HEK293 (cell line): ENCODE measurements at regions of chr6 and their contacts with region 1.

Region 1: GRCh38 chr6:35318196-35319171 is 20.9 kb downstream of the DEF6 start:
- H3K4me3 ChIP-seq: peak overlapping the region; percentile 63
- H3K27ac ChIP-seq: peak overlapping the region; percentile 2; the same call in 1 of the 2 replicates
- H3K4me1 ChIP-seq: no peaks in the 10 kb centered on the region
- CTCF ChIP-seq: peak; percentile 86

Region 2: GRCh38 chr6:35259194-35259947 is 59.1 kb before region 1 on chr6 and contains the start of gene ZNF76:
- CTCF ChIA-PET with region 1: no interaction called
- POLR2A ChIA-PET with region 1: interaction called, 24 read pairs
- H3K4me3 ChIP-seq: peak within 1 kb of the TSS; percentile 76
- H3K27ac ChIP-seq: peak within 1 kb of the TSS; percentile 85
- H3K4me1 ChIP-seq: peaks cover 3% of the 10 kb centered on the region; the same call in 1 of the 2 replicates
- CTCF ChIP-seq: no peak

Region 3: GRCh38 chr6:35297601-35298481 is 20.6 kb before region 1 on chr6 and contains the start of gene DEF6:
- CTCF ChIA-PET with region 1: interaction called, 12 read pairs
- POLR2A ChIA-PET with region 1: interaction called, 18 read pairs
- H3K4me3 ChIP-seq: no peak within 1 kb of the TSS
- H3K27ac ChIP-seq: no peak within 1 kb of the TSS
- H3K4me1 ChIP-seq: no peaks in the 10 kb centered on the region
- CTCF ChIP-seq: 0 out of 2 replicates have a peak, but pooled peaks have one; percentile 45

Region 4: DNA sequence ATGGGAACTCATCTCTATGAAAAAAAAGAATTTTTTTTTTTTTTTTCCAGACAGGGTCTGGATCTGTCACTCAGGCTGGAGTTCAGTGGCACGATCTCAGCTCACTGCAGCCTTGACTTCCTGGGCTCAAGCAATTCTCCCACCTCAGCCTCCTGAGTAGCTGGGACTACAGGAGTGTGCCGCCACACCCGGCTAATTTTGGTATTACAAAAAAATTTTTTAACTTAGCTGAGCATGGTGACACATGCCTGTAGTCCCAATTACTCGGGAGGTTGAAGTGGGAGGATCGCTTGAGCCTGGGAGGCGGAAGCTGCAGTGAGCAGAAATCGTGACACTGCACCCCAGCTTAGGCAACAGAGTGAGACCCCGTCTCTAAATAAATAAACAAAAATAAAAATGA is 13.4 kb before region 1 on chr6:
- CTCF ChIA-PET with region 1: interaction called, 6 read pairs
- POLR2A ChIA-PET with region 1: interaction called, 18 read pairs
- H3K4me3 ChIP-seq: no peak overlapping the region
- H3K27ac ChIP-seq: no peak overlapping the region
- H3K4me1 ChIP-seq: no peaks in the 10 kb centered on the region
- CTCF ChIP-seq: 0 out of 2 replicates have a peak, but pooled peaks have one; percentile 19

Region 5: DNA sequence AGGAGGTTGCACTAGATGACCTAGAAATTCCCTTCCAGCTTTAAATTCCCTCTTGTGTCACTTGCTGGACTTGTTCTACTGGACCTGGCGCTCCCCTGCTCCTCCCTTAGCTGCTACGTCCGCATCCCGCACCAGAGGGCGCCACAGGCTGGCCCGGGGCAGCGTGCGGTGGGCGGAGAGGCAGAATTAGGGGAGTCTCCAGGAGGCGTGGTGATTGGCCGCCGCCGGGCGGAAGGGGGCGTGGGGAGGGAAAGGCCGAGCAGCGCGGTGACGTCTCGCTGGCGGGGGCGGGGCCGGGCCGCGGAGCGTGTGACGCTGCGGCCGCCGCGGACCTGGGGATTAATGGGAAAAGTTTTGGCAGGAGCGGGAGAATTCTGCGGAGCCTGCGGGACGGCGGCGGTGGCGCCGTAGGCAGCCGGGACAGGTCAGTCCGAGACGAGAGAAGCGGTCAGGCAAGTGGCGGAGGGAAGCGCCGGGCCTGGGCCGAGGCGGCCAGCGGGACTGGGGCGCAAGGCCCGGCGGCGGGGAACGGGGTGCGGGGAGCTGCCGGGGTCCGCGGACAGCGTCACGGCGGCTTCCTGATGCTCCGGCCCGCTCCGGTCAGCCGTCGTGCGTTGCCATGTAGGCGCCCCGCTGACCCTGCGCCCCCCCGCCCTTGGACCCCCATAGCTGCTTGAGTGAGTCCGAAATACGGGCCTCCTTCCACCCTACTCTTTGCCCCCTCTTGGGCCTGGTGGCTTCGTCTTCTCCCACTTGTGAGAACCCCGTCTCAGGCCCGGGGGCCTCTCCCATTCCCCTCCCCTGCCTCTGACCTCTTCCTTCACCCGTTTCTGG is 24.0 kb after region 1 on chr6 and contains the start of gene PPARD:
- CTCF ChIA-PET with region 1: interaction called, 14 read pairs
- POLR2A ChIA-PET with region 1: interaction called, 4 read pairs
- H3K4me3 ChIP-seq: peak within 1 kb of the TSS; percentile 65
- H3K27ac ChIP-seq: no peak within 1 kb of the TSS; the same call in 1 of the 2 replicates
- H3K4me1 ChIP-seq: no peaks in the 10 kb centered on the region; the same call in 1 of the 2 replicates
- CTCF ChIP-seq: peak; percentile 97

Region 6: GRCh38 chr6:35377002-35377401 is 58.5 kb after region 1 on chr6:
- CTCF ChIA-PET with region 1: no interaction called
- POLR2A ChIA-PET with region 1: no interaction called
- H3K4me3 ChIP-seq: no peak overlapping the region
- H3K27ac ChIP-seq: no peak overlapping the region
- H3K4me1 ChIP-seq: no peaks in the 10 kb centered on the region
- CTCF ChIP-seq: no peak

Region 7: DNA sequence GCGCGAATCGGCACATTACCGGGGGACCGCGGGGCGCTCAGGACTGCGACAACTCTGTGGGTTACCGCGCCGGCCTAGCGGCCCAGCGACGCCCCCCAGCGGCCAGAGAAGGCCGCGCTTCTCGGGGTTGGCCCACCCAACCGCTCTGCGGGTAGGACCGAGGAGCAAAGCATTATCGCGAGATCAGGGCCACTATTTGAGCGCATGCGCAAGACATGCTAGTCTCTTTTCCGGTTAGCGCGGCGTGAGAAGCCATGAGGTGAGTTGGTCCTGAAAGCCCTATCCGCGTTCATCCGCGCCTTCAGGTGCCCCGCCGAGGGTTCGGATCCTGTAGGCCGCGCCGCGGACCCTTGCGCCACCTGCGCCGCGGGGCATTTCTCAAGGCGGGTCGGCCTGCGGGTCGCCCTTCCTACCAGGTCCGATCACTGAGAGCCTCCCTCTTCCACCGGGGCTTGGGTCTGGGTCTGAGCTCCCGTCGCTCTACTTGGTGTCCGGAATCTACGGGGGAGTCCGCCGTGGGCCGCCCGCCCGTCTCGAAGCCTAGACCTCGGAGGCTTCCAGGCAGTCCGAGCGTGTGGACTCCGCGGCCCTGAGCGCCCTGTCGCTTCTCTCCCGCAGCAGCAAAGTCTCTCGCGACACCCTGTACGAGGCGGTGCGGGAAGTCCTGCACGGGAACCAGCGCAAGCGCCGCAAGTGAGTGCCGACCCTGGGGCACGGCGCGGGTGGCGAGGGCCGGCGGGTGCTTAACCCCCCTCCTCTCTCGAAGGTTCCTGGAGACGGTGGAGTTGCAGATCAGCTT is 149.9 kb after region 1 on chr6 and contains the start of gene RPL10A:
- CTCF ChIA-PET with region 1: interaction called, 4 read pairs
- POLR2A ChIA-PET with region 1: interaction called, 12 read pairs
- H3K4me3 ChIP-seq: peak within 1 kb of the TSS; percentile 80
- H3K27ac ChIP-seq: peak within 1 kb of the TSS; percentile 100
- H3K4me1 ChIP-seq: 0 out of 2 replicates have a peak, but pooled peaks cover 5% of the 10 kb centered on the region
- CTCF ChIP-seq: peak; percentile 99